GM12878 (cell line): ENCODE measurements at regions of chr10 and their contacts with region 1.

Region 1: GRCh38 chr10:48194830-48195229 is 79.7 kb downstream of the FRMPD2 start:
- DNase-seq: no peak
- ATAC-seq: no peak
- H3K4me3 ChIP-seq: no peak overlapping the region
- H3K27ac ChIP-seq: no peak overlapping the region
- H3K4me1 ChIP-seq: no peaks in the 10 kb centered on the region
- H3K27me3 ChIP-seq: no peaks in the 10 kb centered on the region
- CTCF ChIP-seq: no peak
- EP300 ChIP-seq: no peak
- POLR2A ChIP-seq: no peak
- RAD21 ChIP-seq: no peak

Region 2: DNA sequence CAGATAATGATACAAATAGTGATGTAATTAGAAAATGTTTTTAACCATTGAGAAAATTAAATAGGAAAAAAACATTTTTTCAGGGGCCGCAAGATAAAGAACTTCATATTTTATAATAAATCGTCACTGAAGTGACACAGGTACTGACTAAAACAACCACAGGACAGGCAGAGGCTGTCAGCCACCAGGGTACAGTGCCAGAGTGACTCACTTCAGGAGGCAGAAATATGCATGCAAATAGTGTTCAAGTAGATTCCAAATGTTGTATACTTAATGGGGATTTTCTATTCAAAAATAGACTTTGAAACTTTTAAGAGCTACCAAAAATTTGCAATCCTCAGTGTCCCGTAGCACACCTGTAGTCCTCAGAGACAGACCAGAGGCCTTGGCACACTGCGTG is 11.1 kb after region 1 on chr10:
- CTCF ChIA-PET with region 1: interaction called, 11 read pairs
- POLR2A ChIA-PET with region 1: no interaction called
- RAD21 ChIA-PET with region 1: interaction called, 4 read pairs
- SMC1A ChIA-PET with region 1: interaction called, 9 read pairs
- in situ Hi-C with region 1: no loop called
- intact Hi-C with region 1: no loop called
- DNase-seq: peak; percentile 13
- ATAC-seq: peak; percentile 93
- H3K4me3 ChIP-seq: no peak overlapping the region
- H3K27ac ChIP-seq: no peak overlapping the region
- H3K4me1 ChIP-seq: peaks cover 4% of the 10 kb centered on the region; the same call in 1 of the 2 replicates
- H3K27me3 ChIP-seq: no peaks in the 10 kb centered on the region
- CTCF ChIP-seq: no peak
- EP300 ChIP-seq: no peak
- POLR2A ChIP-seq: no peak
- RAD21 ChIP-seq: no peak